ENCODE measurements at regions of chr3 and their contacts with region 1.

Region 1: DNA sequence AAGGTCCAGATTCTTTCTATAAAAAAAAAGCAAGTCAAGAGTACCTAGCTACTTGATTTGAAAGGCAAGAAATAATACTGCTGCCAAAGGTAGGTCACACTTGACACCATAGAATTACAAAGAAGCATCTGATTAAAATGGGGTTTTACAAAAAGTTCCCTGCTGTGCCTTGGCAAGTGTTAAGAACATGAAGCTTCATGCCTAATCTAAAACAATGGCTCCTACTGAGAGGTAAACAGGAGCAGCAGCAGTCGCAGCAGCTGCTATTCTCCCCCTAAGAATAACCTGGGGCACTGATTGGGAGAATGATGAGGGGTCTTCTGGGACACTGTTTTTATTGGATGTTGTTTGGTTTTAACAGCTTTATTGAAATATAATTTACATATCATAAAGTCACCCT is 14.1 kb downstream of the UBP1 start:
- DNase-seq: no peak
- ATAC-seq: no peak

Region 2: DNA sequence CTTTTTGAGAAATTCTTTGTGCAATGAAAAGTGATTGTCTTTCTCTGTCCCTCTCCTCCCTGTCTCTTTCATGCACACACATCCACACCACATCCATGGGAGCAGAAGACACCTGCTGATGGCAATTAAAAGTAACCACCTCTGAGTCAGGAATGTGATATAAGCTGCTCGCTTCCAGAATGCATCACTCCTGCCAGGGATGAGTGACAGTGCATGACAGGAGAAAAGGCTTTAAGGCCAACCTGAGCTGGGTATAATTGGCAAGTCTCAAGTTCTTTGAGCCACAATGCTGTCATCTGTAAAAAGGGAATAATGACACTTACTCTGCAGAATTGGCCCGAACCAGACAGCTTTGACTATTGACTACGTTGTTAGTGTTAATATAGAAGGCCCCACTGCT is 45.4 kb before region 1 on chr3:
- intact Hi-C with region 1: loop called (anchors 5 kb)
- DNase-seq: no peak
- ATAC-seq: no peak

Region 3: DNA sequence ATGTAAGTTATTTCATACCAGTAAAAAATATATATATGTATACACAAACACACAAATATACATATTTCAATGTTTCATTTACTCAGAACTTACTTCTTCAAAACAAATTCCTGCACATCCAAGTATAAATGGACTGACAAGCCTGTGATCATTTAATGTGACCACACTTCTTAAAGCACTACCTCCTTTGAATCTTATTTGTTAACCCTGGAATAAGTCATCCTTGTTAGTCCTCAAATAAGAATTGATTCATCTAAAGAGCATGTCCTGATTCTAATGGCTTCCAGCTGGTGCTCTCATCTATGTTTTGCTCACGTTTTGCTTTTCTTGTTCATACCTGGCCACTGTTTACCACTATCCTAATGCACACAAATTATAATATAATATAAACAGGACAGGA is 118.1 kb after region 1 on chr3:
- intact Hi-C with region 1: no loop called
- DNase-seq: no peak
- ATAC-seq: no peak

Region 4: GRCh38 chr3:33636125-33636850 is 210.2 kb after region 1 on chr3:
- intact Hi-C with region 1: no loop called
- DNase-seq: no peak
- ATAC-seq: no peak